ENCODE measurements at regions of chr2 and their contacts with region 1.

Region 1: GRCh38 chr2:217521820-217522219 is 481.0 kb downstream of the TNS1 start:
- DNase-seq: no peak
- H3K4me3 ChIP-seq: no peak overlapping the region
- H3K27ac ChIP-seq: peak overlapping the region in 3 of 4 donors; percentile 57 to 73 (median 65)
- H3K4me1 ChIP-seq: peaks cover 0 to 20% (median 13%) of the 10 kb centered on the region in 4 donors
- H3K27me3 ChIP-seq: no peaks in the 10 kb centered on the region
- CTCF ChIP-seq: no peak
- EP300 ChIP-seq: peak in 2 of 4 donors; percentile 52 to 76
- POLR2A ChIP-seq: no peak

Region 2: GRCh38 chr2:217497843-217498377 is 23.9 kb before region 1 on chr2:
- intact Hi-C with region 1: no loop called
- DNase-seq: no peak
- H3K4me3 ChIP-seq: no peak overlapping the region
- H3K27ac ChIP-seq: no peak overlapping the region
- H3K4me1 ChIP-seq: no peaks in the 10 kb centered on the region
- H3K27me3 ChIP-seq: no peaks in the 10 kb centered on the region
- CTCF ChIP-seq: no peak
- EP300 ChIP-seq: no peak
- POLR2A ChIP-seq: no peak

Region 3: GRCh38 chr2:217666338-217666737 is 144.5 kb after region 1 on chr2:
- intact Hi-C with region 1: no loop called
- DNase-seq: no peak
- H3K4me3 ChIP-seq: no peak overlapping the region
- H3K27ac ChIP-seq: peak overlapping the region in 2 of 4 donors; percentile 58 to 63
- H3K4me1 ChIP-seq: peaks cover 0 to 56% (median 26%) of the 10 kb centered on the region in 4 donors
- H3K27me3 ChIP-seq: no peaks in the 10 kb centered on the region
- CTCF ChIP-seq: no peak
- EP300 ChIP-seq: no peak
- POLR2A ChIP-seq: no peak

Region 4: GRCh38 chr2:217980036-217980435 is 458.2 kb after region 1 on chr2:
- intact Hi-C with region 1: loop called (anchors 5 kb)
- DNase-seq: peak; percentile 91
- H3K4me3 ChIP-seq: peak overlapping the region in 2 of 4 donors; percentile 70 to 78
- H3K27ac ChIP-seq: peak overlapping the region; percentile 92 to 98 (median 94)
- H3K4me1 ChIP-seq: peaks cover 0 to 59% (median 55%) of the 10 kb centered on the region in 4 donors
- H3K27me3 ChIP-seq: no peaks in the 10 kb centered on the region
- CTCF ChIP-seq: no peak
- EP300 ChIP-seq: no peak
- POLR2A ChIP-seq: no peak